ENCODE measurements at regions of chr11 and their contacts with region 1.

Region 1: GRCh38 chr11:107041088-107041444 is 22.8 kb upstream of the GUCY1A2 start:
- DNase-seq: no peak
- H3K4me3 ChIP-seq: no peak overlapping the region
- H3K27ac ChIP-seq: no peak overlapping the region
- H3K4me1 ChIP-seq: no peaks in the 10 kb centered on the region
- H3K27me3 ChIP-seq: no peaks in the 10 kb centered on the region
- CTCF ChIP-seq: no peak
- POLR2A ChIP-seq: no peak

Region 2: DNA sequence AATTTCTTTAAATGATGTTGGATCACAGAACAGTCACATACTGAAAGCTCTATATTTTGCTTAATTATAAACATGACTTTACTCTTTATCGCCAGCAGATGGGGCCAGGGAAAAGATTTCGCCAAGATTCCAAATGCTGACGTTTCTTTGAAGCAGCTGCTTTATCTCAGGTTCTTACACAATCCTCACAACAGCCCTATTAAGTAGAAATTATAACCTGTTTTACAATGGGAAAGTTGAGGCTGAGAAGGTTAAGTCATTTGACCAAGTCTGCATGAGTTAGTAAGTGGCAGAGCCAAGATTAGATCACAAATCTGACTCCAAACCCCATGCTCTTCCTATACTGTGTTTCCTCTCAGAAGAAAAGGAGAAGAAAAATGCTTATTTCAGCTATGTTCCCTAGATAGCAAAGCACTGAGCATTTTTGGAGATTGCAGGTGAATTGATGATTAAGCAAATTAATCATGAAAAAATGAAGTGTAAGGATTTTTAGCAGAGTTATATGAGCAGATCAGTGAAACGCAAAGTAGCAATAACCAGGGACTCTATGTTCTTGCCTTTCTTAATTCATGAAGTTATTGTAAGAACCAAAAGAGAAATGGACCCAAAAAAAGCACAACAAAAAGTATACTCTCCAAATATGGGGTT is 884.7 kb before region 1 on chr11:
- CTCF ChIA-PET with region 1: interaction called, 4 read pairs
- POLR2A ChIA-PET with region 1: no interaction called
- dilution Hi-C with region 1: no loop called
- intact Hi-C with region 1: loop called (anchors 1 kb)
- DNase-seq: peak; percentile 37
- H3K4me3 ChIP-seq: no peak overlapping the region
- H3K27ac ChIP-seq: no peak overlapping the region
- H3K4me1 ChIP-seq: no peaks in the 10 kb centered on the region
- H3K27me3 ChIP-seq: no peaks in the 10 kb centered on the region
- CTCF ChIP-seq: peak; percentile 13 to 24
- POLR2A ChIP-seq: no peak

Region 3: GRCh38 chr11:106724293-106724892 is 316.7 kb before region 1 on chr11:
- CTCF ChIA-PET with region 1: no interaction called
- POLR2A ChIA-PET with region 1: no interaction called
- dilution Hi-C with region 1: no loop called
- intact Hi-C with region 1: loop called (anchors 2 kb)
- DNase-seq: no peak
- H3K4me3 ChIP-seq: no peak overlapping the region
- H3K27ac ChIP-seq: no peak overlapping the region
- H3K4me1 ChIP-seq: no peaks in the 10 kb centered on the region
- H3K27me3 ChIP-seq: no peaks in the 10 kb centered on the region
- CTCF ChIP-seq: no peak
- POLR2A ChIP-seq: no peak

Region 4: DNA sequence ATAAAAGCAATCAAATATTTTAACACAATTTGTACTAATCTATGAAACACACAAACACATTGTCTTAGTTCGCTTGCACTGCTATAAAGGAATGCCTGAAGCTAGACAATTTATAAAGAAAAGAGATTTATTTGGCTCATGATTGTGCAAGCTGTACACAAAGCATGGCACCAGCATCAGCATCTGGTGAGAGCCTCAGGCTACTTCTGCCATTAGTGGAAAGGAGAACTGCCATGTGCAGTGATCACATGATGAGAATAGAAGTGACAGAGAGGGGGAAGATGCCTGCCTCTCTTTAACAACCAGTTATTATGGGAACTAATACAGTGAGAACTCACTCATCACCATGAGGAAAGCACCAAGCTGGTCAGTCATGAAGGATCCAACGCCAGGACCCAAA is 127.9 kb before region 1 on chr11:
- CTCF ChIA-PET with region 1: no interaction called
- POLR2A ChIA-PET with region 1: no interaction called
- dilution Hi-C with region 1: no loop called
- intact Hi-C with region 1: no loop called
- DNase-seq: no peak
- H3K4me3 ChIP-seq: no peak overlapping the region
- H3K27ac ChIP-seq: no peak overlapping the region
- H3K4me1 ChIP-seq: no peaks in the 10 kb centered on the region
- H3K27me3 ChIP-seq: no peaks in the 10 kb centered on the region
- CTCF ChIP-seq: no peak
- POLR2A ChIP-seq: no peak